ENCODE measurements at regions of chr5 and their contacts with region 1.

Region 1: GRCh38 chr5:139501381-139501780 is 18.8 kb upstream of the STING1 start:
- DNase-seq: no peak
- ATAC-seq: no peak
- H3K4me3 ChIP-seq: no peak overlapping the region
- H3K27ac ChIP-seq: no peak overlapping the region
- H3K4me1 ChIP-seq: peaks cover 0 to 2% of the 10 kb centered on the region in 2 experiments; a peak in 2 of 5 replicates
- H3K27me3 ChIP-seq: no peaks in the 10 kb centered on the region
- CTCF ChIP-seq: no peak
- EP300 ChIP-seq: no peak
- POLR2A ChIP-seq: no peak
- RAD21 ChIP-seq: no peak

Region 2: GRCh38 chr5:139439013-139439903 is 62.1 kb before region 1 on chr5 and contains the start of gene DNAJC18:
- CTCF ChIA-PET with region 1: no interaction called
- POLR2A ChIA-PET with region 1: interaction called, 10 read pairs
- in situ Hi-C with region 1: no loop called
- intact Hi-C with region 1: no loop called
- DNase-seq: peak; percentile 94 to 97 (median 95)
- ATAC-seq: peak; percentile 97
- H3K4me3 ChIP-seq: peak within 1 kb of the TSS; percentile 80
- H3K27ac ChIP-seq: peak within 1 kb of the TSS; percentile 91
- H3K4me1 ChIP-seq: peaks cover 11 to 17% of the 10 kb centered on the region in 2 experiments
- H3K27me3 ChIP-seq: no peaks in the 10 kb centered on the region
- CTCF ChIP-seq: no peak
- EP300 ChIP-seq: no peak
- POLR2A ChIP-seq: peak; percentile 64
- RAD21 ChIP-seq: no peak
- polyA plus RNA-seq, gene DNAJC18: 7.7 to 13.3 TPM

Region 3: GRCh38 chr5:139482050-139482889 is 19.1 kb before region 1 on chr5 and contains the start of gene STING1:
- CTCF ChIA-PET with region 1: no interaction called
- POLR2A ChIA-PET with region 1: interaction called, 23 read pairs
- in situ Hi-C with region 1: no loop called
- intact Hi-C with region 1: loop called (anchors 2 kb)
- DNase-seq: peak; percentile 75 to 96 (median 82)
- ATAC-seq: peak; percentile 79
- H3K4me3 ChIP-seq: peak within 1 kb of the TSS; percentile 58
- H3K27ac ChIP-seq: peak within 1 kb of the TSS; percentile 98
- H3K4me1 ChIP-seq: peaks cover 52 to 53% of the 10 kb centered on the region in 2 experiments
- H3K27me3 ChIP-seq: no peaks in the 10 kb centered on the region
- CTCF ChIP-seq: 0 out of 6 replicates have a peak, but pooled peaks of 1 of the 3 experiments have one; percentile 3
- EP300 ChIP-seq: peak; percentile 46; the same call in 1 of the 2 replicates
- POLR2A ChIP-seq: peak; percentile 76
- RAD21 ChIP-seq: peak in 1 of 2 experiments; percentile 32; a peak in 1 of 4 replicates
- polyA plus RNA-seq, gene STING1: 20.8 to 23.3 TPM

Region 4: DNA sequence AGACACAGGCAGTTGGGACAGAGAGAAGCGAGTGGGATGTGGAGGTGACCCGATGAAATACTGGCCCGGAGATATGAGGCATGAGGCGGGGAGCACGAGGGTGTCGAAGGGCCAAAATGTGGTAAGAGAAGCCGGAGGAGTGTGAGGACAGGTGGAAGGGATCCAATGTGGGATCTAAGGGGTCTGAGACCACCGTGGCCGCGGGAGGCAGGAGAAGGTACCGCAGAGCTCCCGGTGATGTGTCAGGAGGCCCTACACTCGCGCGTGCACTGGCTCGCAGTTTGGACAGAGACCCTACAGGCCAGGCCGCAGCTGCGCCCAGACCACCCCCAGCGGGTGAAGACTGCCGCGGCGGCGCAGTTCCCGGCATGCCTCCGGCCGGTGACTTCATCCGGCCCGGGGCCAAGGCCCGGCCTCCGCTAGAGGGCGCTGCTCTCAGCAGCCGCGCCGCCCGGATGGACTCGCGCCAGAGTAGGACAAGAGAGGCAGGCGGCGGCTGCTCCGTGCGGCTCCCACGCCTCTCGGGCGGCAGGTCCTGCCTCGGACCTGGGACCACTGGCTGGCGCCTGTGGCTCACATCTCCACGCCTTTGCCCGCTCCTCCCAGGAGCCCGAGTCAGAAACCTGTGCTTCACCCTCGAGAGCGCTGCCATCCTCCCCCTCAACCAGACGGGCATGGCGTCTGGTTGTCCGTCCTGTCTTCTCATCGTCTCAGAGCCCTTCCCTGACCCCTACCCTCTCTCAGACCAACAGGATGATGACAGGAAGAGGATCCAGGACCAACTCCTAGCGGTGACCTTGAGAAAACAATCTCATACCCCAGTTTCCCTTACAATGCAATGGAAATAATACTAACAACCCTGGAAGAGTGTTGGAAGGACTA is 16.5 kb after region 1 on chr5:
- CTCF ChIA-PET with region 1: no interaction called
- POLR2A ChIA-PET with region 1: interaction called, 24 read pairs
- in situ Hi-C with region 1: no loop called
- intact Hi-C with region 1: no loop called
- DNase-seq: peak; percentile 95 to 96 (median 96)
- ATAC-seq: peak; percentile 95
- H3K4me3 ChIP-seq: peak overlapping the region; percentile 44
- H3K27ac ChIP-seq: peak overlapping the region; percentile 90
- H3K4me1 ChIP-seq: peaks cover 14 to 17% of the 10 kb centered on the region in 2 experiments
- H3K27me3 ChIP-seq: no peaks in the 10 kb centered on the region
- CTCF ChIP-seq: peak; percentile 94 to 96 (median 95)
- EP300 ChIP-seq: peak; percentile 60; the same call in 1 of the 2 replicates
- POLR2A ChIP-seq: peak; percentile 89
- RAD21 ChIP-seq: peak; percentile 62 to 67